ENCODE measurements at regions of chr6 and their contacts with region 1.

Region 1: GRCh38 chr6:2841264-2842138 is at the start of gene SERPINB1:
- DNase-seq: peak; percentile 86
- ATAC-seq: peak; percentile 86
- H3K4me3 Mint-ChIP-seq: peak within 1 kb of the TSS; percentile 78
- H3K27ac Mint-ChIP-seq: peak within 1 kb of the TSS; percentile 78
- H3K4me1 Mint-ChIP-seq: peaks cover 58% of the 10 kb centered on the region
- H3K27me3 Mint-ChIP-seq: no peaks in the 10 kb centered on the region
- total RNA-seq, gene SERPINB1: 55.1 to 57.1 TPM

Region 2: GRCh38 chr6:2522521-2522920 is 319.0 kb before region 1 on chr6:
- CTCF ChIA-PET with region 1: no interaction called
- POLR2A ChIA-PET with region 1: no interaction called
- DNase-seq: no peak
- ATAC-seq: no peak
- H3K4me3 Mint-ChIP-seq: no peak overlapping the region
- H3K27ac Mint-ChIP-seq: no peak overlapping the region
- H3K4me1 Mint-ChIP-seq: peaks cover 14% of the 10 kb centered on the region
- H3K27me3 Mint-ChIP-seq: peaks cover 39% of the 10 kb centered on the region

Region 3: GRCh38 chr6:2765166-2765895 is 76.2 kb before region 1 on chr6 and contains the start of gene WRNIP1:
- CTCF ChIA-PET with region 1: interaction called, 14 read pairs
- POLR2A ChIA-PET with region 1: interaction called, 5 read pairs
- DNase-seq: peak; percentile 98
- ATAC-seq: peak; percentile 91
- H3K4me3 Mint-ChIP-seq: peak within 1 kb of the TSS; percentile 92
- H3K27ac Mint-ChIP-seq: peak within 1 kb of the TSS; percentile 97
- H3K4me1 Mint-ChIP-seq: peaks cover 55% of the 10 kb centered on the region
- H3K27me3 Mint-ChIP-seq: no peaks in the 10 kb centered on the region
- total RNA-seq, gene WRNIP1: 48.2 to 49.6 TPM

Region 4: GRCh38 chr6:2900821-2901644 is 59.5 kb after region 1 on chr6:
- CTCF ChIA-PET with region 1: interaction called, 48 read pairs
- POLR2A ChIA-PET with region 1: interaction called, 6 read pairs
- DNase-seq: peak; percentile 21
- ATAC-seq: no peak
- H3K4me3 Mint-ChIP-seq: peak overlapping the region; percentile 94
- H3K27ac Mint-ChIP-seq: peak overlapping the region; percentile 62
- H3K4me1 Mint-ChIP-seq: peaks cover 53% of the 10 kb centered on the region
- H3K27me3 Mint-ChIP-seq: no peaks in the 10 kb centered on the region

Region 5: GRCh38 chr6:2917065-2917464 is 75.6 kb after region 1 on chr6:
- CTCF ChIA-PET with region 1: interaction called, 83 read pairs
- POLR2A ChIA-PET with region 1: interaction called, 16 read pairs
- DNase-seq: peak; percentile 18
- ATAC-seq: no peak
- H3K4me3 Mint-ChIP-seq: no peak overlapping the region
- H3K27ac Mint-ChIP-seq: no peak overlapping the region
- H3K4me1 Mint-ChIP-seq: peaks cover 24% of the 10 kb centered on the region
- H3K27me3 Mint-ChIP-seq: peaks cover 3% of the 10 kb centered on the region

Region 6: DNA sequence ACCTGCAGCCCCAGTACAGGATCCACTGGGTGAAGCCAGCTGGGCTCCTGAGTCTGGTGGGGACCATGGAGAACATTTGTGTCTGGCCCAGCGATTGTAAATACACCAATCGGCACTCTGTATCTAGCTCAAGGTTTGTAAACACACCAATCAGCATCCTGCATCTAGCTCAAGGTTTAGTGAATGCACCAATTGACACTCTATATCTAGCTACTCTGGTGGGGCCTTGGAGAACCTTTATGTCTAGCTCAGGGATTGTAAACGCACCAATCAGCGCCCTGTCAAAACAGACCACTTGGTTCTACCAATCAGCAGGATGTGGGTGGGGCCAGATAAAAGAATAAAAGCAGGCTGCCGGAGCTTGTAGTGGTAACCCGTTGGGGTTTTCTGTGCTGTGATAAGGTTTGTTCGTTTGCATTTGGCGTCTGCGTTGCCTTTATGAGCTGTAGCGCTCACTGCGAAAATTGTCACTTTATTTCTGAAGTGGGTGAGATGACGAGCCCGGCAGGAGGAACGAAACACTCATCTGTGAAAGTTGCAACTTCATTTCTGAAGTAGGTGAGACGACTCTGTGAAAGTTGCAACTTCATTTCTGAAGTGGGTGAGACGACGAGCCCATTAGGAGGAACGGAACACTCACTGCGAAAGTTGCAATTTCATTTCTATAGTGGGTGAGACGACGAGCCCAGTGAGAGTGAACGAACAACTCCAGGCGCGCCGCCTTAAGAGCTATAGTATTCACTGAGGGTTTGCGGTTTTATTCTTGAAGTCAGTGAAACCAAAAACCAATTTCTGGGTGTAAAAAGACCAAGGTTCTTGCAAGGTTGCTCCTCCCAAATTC is 98.7 kb after region 1 on chr6:
- CTCF ChIA-PET with region 1: interaction called, 267 read pairs
- POLR2A ChIA-PET with region 1: interaction called, 12 read pairs
- DNase-seq: peak; percentile 87
- ATAC-seq: peak; percentile 85
- H3K4me3 Mint-ChIP-seq: peak overlapping the region; percentile 74
- H3K27ac Mint-ChIP-seq: peak overlapping the region; percentile 94
- H3K4me1 Mint-ChIP-seq: peaks cover 68% of the 10 kb centered on the region
- H3K27me3 Mint-ChIP-seq: no peaks in the 10 kb centered on the region